Left ventricle myocardium inferior (tissue), 1 donor: ENCODE measurements at regions of chr11 and their contacts with region 1.

Region 1: GRCh38 chr11:90288212-90288821 is 65.5 kb upstream of the CHORDC1 start:
- DNase-seq: no peak
- H3K4me3 ChIP-seq: no peak overlapping the region
- H3K27ac ChIP-seq: no peak overlapping the region
- H3K4me1 ChIP-seq: no peaks in the 10 kb centered on the region
- H3K27me3 ChIP-seq: no peaks in the 10 kb centered on the region
- CTCF ChIP-seq: peak; percentile 72

Region 2: GRCh38 chr11:90434858-90435257 is 146.5 kb after region 1 on chr11:
- intact Hi-C with region 1: loop called (anchors 10 kb)
- DNase-seq: no peak
- H3K4me3 ChIP-seq: no peak overlapping the region
- H3K27ac ChIP-seq: no peak overlapping the region
- H3K4me1 ChIP-seq: peaks cover 12% of the 10 kb centered on the region
- H3K27me3 ChIP-seq: no peaks in the 10 kb centered on the region
- CTCF ChIP-seq: peak; percentile 50